ENCODE measurements at regions of chr6 and their contacts with region 1.

Region 1: GRCh38 chr6:47655719-47656595 is 42.4 kb upstream of the ADGRF4 start:
- DNase-seq: peak; percentile 62
- H3K4me3 Mint-ChIP-seq: no peak overlapping the region
- H3K27ac Mint-ChIP-seq: no peak overlapping the region
- H3K4me1 Mint-ChIP-seq: no peaks in the 10 kb centered on the region
- H3K27me3 Mint-ChIP-seq: no peaks in the 10 kb centered on the region

Region 2: GRCh38 chr6:47438481-47439347 is 217.2 kb before region 1 on chr6:
- CTCF ChIA-PET with region 1: no interaction called
- POLR2A ChIA-PET with region 1: no interaction called
- intact Hi-C with region 1: no loop called
- DNase-seq: no peak
- H3K4me3 Mint-ChIP-seq: no peak overlapping the region
- H3K27ac Mint-ChIP-seq: no peak overlapping the region
- H3K4me1 Mint-ChIP-seq: no peaks in the 10 kb centered on the region
- H3K27me3 Mint-ChIP-seq: peaks cover 4% of the 10 kb centered on the region

Region 3: GRCh38 chr6:47722194-47722593 is 66.2 kb after region 1 on chr6:
- CTCF ChIA-PET with region 1: no interaction called
- POLR2A ChIA-PET with region 1: no interaction called
- intact Hi-C with region 1: loop called (anchors 10 kb)
- DNase-seq: no peak
- H3K4me3 Mint-ChIP-seq: no peak overlapping the region
- H3K27ac Mint-ChIP-seq: no peak overlapping the region
- H3K4me1 Mint-ChIP-seq: no peaks in the 10 kb centered on the region
- H3K27me3 Mint-ChIP-seq: peaks cover 3% of the 10 kb centered on the region

Region 4: GRCh38 chr6:47741807-47742206 is 85.8 kb after region 1 on chr6:
- CTCF ChIA-PET with region 1: no interaction called
- POLR2A ChIA-PET with region 1: no interaction called
- intact Hi-C with region 1: loop called (anchors 5 kb)
- DNase-seq: no peak
- H3K4me3 Mint-ChIP-seq: no peak overlapping the region
- H3K27ac Mint-ChIP-seq: no peak overlapping the region
- H3K4me1 Mint-ChIP-seq: peaks cover 10% of the 10 kb centered on the region
- H3K27me3 Mint-ChIP-seq: no peaks in the 10 kb centered on the region

Measured in activated CD4-positive, alpha-beta memory T cell treated with anti-CD3 and anti-CD28 coated beads for 36 hours (primary cell).